Upper lobe of right lung (tissue), 1 donor: ENCODE measurements at regions of chr1 and their contacts with region 1.

Region 1: DNA sequence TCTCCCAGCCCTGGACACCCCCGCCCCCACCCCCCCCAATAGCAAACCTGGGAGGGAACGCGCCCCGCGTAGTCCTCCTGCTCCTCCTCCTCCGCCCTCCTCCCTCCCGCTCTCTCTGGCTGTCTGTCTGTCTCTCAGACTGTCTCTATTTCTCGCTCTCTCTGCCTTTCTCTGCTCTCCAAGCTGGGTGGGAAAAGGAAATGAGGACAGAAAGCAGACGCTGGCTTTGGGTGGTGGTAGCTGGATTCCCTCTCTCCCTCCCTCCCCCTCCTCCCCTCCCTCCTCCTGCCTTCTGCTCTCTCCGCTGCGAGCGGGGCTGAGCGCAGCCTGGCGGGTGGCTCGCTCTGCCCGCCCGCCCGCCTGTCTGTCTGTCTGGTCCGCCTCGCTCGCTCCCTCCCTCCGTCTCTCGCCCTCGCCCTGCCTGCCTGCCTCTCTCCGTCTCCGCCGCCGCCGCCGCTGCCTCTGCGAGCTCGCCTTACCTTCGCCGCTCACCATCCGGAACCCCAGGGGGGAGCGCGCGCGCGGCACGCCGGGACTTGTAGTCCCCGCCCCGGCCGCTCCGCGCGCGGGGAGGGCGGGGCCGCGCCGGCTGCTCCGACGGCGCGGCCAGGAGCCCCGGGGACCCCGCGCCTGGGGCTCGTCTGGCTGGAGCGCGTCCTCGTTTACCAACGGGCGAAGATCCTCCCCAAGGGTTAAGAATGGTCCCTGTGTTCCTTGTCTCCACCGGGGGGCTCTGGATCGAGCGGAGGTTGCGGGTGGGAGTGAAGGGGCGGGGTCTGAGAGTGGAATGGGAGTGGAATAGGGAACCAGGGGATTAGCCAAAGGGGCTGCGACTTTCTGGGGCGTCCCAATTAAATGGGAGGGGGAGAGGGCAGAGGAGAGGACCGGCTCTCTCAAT is at the start of gene AHDC1:
- DNase-seq: peak; percentile 96
- ATAC-seq: peak; percentile 84
- H3K4me3 ChIP-seq: peak within 1 kb of the TSS; percentile 82
- H3K27ac ChIP-seq: peak within 1 kb of the TSS; percentile 81
- H3K4me1 ChIP-seq: peaks cover 38% of the 10 kb centered on the region
- H3K27me3 ChIP-seq: no peaks in the 10 kb centered on the region
- CTCF ChIP-seq: no peak
- total RNA-seq, gene AHDC1: 34.2 TPM

Region 2: DNA sequence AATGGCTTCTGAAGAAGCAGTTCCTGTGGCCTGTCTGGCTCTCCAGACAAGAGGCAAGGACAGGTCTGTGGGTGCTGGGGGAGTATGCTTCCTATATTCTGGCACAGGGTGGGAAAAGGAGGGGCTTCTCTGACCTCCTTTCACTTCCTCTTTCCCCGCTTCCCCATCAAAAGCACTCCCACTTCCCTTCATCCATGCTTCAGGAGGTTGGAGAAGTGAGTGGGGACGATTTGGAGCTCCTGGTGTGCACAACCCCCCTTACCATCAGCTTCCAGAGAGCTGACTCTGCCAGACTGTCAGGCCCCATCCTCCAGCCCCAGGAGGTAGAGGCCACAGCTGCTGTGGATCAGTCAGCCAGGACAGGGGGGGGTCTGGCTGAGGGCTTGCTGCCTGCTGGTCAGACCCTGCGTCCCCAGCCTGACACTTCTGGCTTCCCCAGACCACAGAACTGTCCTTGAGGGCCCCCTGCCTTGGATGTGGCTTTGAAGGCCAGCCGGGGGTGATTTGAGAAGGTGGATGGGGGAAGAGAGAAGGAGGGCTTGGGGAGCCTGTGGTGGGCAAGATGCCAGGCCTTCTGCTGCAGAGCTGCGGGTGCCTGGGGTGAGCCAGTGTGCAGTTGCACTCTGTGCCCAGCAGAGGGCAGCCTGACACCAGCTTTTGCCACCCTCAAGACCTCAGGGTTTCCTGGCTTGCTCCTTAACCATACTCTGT is 303.4 kb before region 1 on chr1:
- intact Hi-C with region 1: loop called (anchors 5 kb)
- DNase-seq: peak; percentile 91
- ATAC-seq: peak; percentile 93
- H3K4me3 ChIP-seq: no peak overlapping the region
- H3K27ac ChIP-seq: peak overlapping the region; percentile 78
- H3K4me1 ChIP-seq: peaks cover 21% of the 10 kb centered on the region
- H3K27me3 ChIP-seq: no peaks in the 10 kb centered on the region
- CTCF ChIP-seq: peak; percentile 99

Region 3: DNA sequence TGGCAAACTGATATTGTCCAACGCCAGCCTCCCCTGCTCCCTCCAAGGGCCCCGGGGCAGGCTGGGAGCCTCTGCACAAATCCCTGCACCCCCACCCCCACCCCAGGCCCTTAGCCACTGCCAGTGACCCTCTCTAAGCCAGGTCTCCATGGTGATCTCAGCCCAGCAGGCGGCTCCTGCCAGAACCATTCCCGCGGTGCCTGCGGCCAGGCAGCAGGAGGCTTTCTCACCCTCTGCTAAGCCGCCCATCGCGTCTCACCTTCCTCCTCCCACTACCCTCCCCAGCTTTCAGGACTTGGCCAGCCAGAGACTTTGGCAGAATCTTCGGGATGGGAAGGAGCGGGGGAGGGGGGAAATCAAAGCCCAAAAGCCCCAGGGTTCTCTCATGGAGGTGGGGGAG is 67.2 kb before region 1 on chr1:
- intact Hi-C with region 1: loop called (anchors 10 kb)
- DNase-seq: no peak
- ATAC-seq: peak; percentile 56
- H3K4me3 ChIP-seq: no peak overlapping the region
- H3K27ac ChIP-seq: no peak overlapping the region
- H3K4me1 ChIP-seq: peaks cover 17% of the 10 kb centered on the region
- H3K27me3 ChIP-seq: no peaks in the 10 kb centered on the region
- CTCF ChIP-seq: no peak